ENCODE measurements at regions of chr1 and their contacts with region 1.

Region 1: GRCh38 chr1:145955436-145955835 is 2.4 kb downstream of the LIX1L start:
- DNase-seq: no peak
- ATAC-seq: no peak
- H3K4me3 ChIP-seq: peak overlapping the region; percentile 68
- H3K27ac ChIP-seq: peak overlapping the region; percentile 92
- H3K4me1 ChIP-seq: peaks cover 73% of the 10 kb centered on the region
- H3K27me3 ChIP-seq: no peaks in the 10 kb centered on the region
- CTCF ChIP-seq: no peak

Region 2: GRCh38 chr1:145918144-145918992 is 37.1 kb before region 1 on chr1 and contains the start of gene PEX11B:
- intact Hi-C with region 1: loop called in 1 of 2 experiments (anchors 5 kb)
- DNase-seq: peak; percentile 89 to 93
- ATAC-seq: peak; percentile 88 to 94 (median 90)
- H3K4me3 ChIP-seq: peak within 1 kb of the TSS; percentile 98
- H3K27ac ChIP-seq: peak within 1 kb of the TSS; percentile 88
- H3K4me1 ChIP-seq: peaks cover 21% of the 10 kb centered on the region
- H3K27me3 ChIP-seq: no peaks in the 10 kb centered on the region
- CTCF ChIP-seq: no peak
- total RNA-seq, gene PEX11B: 19.3 to 36.3 (median 23.1) TPM

Region 3: GRCh38 chr1:145936247-145936646 is 19.2 kb before region 1 on chr1:
- intact Hi-C with region 1: loop called in 1 of 2 experiments (anchors 2 kb)
- DNase-seq: peak in 1 of 2 donors; percentile 74
- ATAC-seq: peak; percentile 80 to 90 (median 82)
- H3K4me3 ChIP-seq: no peak overlapping the region
- H3K27ac ChIP-seq: peak overlapping the region; percentile 70
- H3K4me1 ChIP-seq: peaks cover 37% of the 10 kb centered on the region
- H3K27me3 ChIP-seq: no peaks in the 10 kb centered on the region
- CTCF ChIP-seq: no peak